Activated CD4-positive, alpha-beta memory T cell treated with anti-CD3 and anti-CD28 coated beads for 36 hours (primary cell): ENCODE measurements at regions of chr14 and their contacts with region 1.

Region 1: GRCh38 chr14:78022059-78022458 is 148.1 kb upstream of the NRXN3 start:
- DNase-seq: peak; percentile 76
- H3K4me3 Mint-ChIP-seq: no peak overlapping the region
- H3K27ac Mint-ChIP-seq: no peak overlapping the region
- H3K4me1 Mint-ChIP-seq: no peaks in the 10 kb centered on the region
- H3K27me3 Mint-ChIP-seq: peaks cover 4% of the 10 kb centered on the region

Region 2: GRCh38 chr14:77442196-77442595 is 579.9 kb before region 1 on chr14:
- CTCF ChIA-PET with region 1: no interaction called
- POLR2A ChIA-PET with region 1: no interaction called
- intact Hi-C with region 1: no loop called
- DNase-seq: no peak
- H3K4me3 Mint-ChIP-seq: no peak overlapping the region
- H3K27ac Mint-ChIP-seq: no peak overlapping the region
- H3K4me1 Mint-ChIP-seq: no peaks in the 10 kb centered on the region
- H3K27me3 Mint-ChIP-seq: no peaks in the 10 kb centered on the region

Region 3: DNA sequence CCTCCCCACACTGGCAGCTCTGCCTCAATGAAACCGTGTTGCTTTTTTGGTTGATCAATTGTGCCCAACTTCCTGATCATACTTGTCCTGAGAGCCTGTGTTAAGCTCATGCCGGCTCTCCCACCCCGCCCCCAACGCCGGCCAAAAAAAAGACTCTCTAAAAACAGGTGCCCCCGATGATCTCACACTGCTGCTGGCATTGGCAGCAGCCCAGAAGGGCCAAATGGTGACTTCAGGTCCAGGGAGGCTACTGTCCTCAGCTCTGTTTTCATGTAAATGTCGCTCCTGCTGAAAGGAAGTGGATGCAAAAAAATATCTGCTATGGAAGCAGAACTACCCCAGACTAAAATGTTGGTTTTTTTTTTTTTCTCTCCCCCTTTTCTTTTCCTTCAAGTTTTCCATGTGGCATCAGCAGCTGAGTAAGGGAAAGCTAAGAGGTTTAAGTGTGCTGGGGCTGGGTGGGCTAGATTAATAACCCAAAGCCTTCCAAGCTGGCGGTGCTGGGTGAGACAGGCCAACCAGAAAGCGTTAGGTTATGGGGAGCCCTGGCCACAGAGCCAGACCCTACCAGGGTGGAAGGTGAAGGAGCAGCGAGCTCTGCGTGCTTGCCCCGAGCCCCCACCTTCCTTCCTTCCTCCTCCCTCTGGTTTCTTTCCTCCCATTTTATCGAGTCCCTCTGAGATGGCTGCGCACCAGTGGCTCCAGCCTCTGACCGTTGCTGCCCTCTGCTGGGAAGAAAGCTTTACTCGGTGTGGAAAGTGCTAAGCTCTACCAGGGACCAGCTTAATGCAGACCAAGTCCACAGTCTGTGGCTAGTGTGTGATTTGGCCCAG is 544.2 kb after region 1 on chr14:
- CTCF ChIA-PET with region 1: interaction called, 15 read pairs
- POLR2A ChIA-PET with region 1: no interaction called
- intact Hi-C with region 1: no loop called
- DNase-seq: peak; percentile 75
- H3K4me3 Mint-ChIP-seq: no peak overlapping the region
- H3K27ac Mint-ChIP-seq: no peak overlapping the region
- H3K4me1 Mint-ChIP-seq: no peaks in the 10 kb centered on the region
- H3K27me3 Mint-ChIP-seq: no peaks in the 10 kb centered on the region